GM10248 (cell line): ENCODE measurements at regions of chr6 and their contacts with region 1.

Region 1: DNA sequence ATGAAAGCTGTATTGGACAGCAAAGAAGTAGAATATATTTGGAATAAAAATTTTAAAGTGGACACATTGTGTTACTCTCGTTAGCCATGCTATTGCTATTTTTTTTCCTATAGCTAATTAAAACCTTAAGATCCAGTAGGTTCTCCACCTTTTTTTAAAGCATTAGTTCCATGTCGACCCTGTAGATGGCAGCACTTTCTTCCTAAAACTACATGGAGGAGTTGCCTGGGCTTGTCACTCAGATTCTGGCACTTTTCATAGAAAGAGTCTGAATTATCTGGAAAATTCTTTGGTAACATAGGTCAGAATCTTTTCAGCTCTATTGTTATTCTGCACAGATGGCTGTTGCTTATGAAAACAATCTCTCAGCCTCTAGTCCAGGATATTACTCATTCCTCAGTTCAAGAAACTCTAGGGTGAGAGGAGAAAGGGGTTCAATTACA is 42.0 kb upstream of the ESR1 start:
- DNase-seq: peak; percentile 62
- CTCF ChIP-seq: peak; percentile 56

Region 2: DNA sequence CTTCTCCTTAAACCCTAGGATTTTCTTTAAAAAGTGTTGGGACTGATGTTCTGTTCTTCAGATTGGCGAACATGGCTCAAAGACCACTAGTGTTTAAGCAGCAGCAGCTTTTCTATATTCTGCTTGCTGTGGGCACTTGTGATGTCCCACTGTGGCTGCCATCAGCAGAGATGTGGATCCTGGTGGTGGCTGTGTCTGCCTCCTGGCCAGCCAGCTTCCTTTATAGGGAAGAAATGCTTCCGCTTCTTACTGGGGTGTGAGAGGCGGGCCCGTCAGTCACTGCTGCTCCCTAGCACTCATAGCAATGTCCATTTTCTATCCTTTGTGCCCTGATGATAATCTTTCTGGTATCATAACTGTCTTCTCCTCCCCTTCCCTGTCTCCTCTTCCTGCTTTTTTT is 24.6 kb before region 1 on chr6:
- CTCF ChIA-PET with region 1: interaction called, 11 read pairs
- POLR2A ChIA-PET with region 1: no interaction called
- DNase-seq: no peak
- CTCF ChIP-seq: no peak